ENCODE measurements at regions of chr1 and their contacts with region 1.

Region 1: DNA sequence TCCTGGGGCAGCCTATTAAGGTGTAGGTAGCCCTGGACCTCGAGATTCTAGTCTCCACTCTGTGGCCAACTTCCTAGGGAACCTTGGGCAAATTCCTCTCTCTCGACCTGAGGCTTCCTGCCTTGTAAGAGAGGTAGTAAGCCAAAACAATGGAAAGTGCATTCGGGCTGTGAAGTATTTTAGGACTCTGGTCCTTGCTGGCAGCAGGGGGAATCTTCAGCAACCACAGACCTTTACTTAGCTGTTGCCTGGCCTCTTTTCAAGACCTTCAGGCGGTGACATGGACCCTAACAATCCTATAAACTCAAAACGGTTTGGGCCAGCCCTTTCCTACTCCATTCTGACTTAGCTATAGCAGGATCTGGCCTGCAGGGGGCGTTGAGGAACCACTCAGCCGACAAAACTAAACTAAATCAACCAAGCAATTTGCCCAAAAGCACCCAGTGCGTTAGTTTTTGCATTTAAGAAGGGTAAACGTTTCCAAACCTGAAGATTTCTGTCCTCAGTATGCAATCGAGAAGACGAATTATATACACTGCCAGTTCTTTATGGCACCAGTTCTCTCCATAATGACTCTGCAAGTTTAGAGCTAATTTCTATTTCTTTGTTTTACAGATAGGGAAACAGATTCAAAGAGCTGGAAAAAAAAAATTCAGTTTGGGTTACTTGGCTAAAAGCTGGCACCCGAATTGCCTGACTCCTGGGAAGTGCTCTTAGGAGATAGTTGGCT is 10.9 kb upstream of the SESN2 start:
- DNase-seq: peak; percentile 85
- ATAC-seq: peak; percentile 53
- H3K4me3 Mint-ChIP-seq: peak overlapping the region; percentile 68
- H3K27ac Mint-ChIP-seq: peak overlapping the region; percentile 96
- H3K4me1 Mint-ChIP-seq: peaks cover 34% of the 10 kb centered on the region
- H3K27me3 Mint-ChIP-seq: no peaks in the 10 kb centered on the region
- CTCF ChIP-seq: peak; percentile 95

Region 2: GRCh38 chr1:28208818-28209441 is 39.5 kb before region 1 on chr1:
- CTCF ChIA-PET with region 1: no interaction called
- POLR2A ChIA-PET with region 1: no interaction called
- DNase-seq: peak; percentile 61
- ATAC-seq: peak; percentile 72
- H3K4me3 Mint-ChIP-seq: no peak overlapping the region
- H3K27ac Mint-ChIP-seq: peak overlapping the region; percentile 54
- H3K4me1 Mint-ChIP-seq: peaks cover 6% of the 10 kb centered on the region
- H3K27me3 Mint-ChIP-seq: no peaks in the 10 kb centered on the region
- CTCF ChIP-seq: no peak; the same call in 1 of the 2 replicates

Region 3: DNA sequence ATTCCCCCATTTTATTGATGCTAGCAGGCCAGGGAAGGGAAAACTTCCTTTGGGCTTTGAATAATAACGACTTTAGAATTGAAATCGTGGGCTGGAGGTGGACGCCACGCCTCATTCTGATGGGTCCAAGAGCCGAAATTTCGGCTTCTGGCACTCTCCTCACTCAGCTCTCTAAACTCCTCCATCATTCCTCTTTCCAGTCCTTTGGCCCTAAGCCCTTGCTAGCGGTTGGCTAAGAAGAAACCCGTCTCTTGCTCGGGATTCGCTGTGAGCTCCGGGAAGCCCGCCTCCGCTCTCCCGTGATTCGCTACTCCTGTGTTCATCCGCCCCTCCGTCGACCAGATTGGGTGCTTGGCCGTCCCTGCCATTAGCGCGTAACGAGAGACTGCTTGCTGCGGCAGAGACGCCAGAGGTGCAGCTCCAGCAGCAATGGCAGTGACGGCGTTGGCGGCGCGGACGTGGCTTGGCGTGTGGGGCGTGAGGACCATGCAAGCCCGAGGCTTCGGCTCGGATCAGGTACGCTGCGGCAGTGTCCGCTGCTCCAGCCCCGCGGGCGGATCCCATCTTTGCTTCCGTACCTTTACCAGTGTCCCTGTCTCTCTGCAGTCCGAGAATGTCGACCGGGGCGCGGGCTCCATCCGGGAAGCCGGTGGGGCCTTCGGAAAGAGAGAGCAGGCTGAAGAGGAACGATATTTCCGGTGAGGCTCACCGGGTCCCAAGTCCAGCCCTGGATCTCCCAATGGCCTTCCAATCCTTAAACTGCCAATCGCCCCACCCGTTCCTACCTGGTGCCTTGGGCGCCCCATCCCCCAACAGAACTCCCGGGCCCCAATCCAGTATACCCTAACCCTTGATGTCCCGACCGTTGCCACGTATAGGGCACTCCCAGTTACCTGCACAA is 12.4 kb before region 1 on chr1 and contains the start of gene ATP5IF1:
- CTCF ChIA-PET with region 1: interaction called, 36 read pairs
- POLR2A ChIA-PET with region 1: interaction called, 9 read pairs
- DNase-seq: peak; percentile 95
- ATAC-seq: peak; percentile 97
- H3K4me3 Mint-ChIP-seq: no peak within 1 kb of the TSS
- H3K27ac Mint-ChIP-seq: no peak within 1 kb of the TSS
- H3K4me1 Mint-ChIP-seq: peaks cover 8% of the 10 kb centered on the region
- H3K27me3 Mint-ChIP-seq: no peaks in the 10 kb centered on the region
- CTCF ChIP-seq: no peak
- total RNA-seq, gene ATP5IF1: 201 to 245 TPM (median 228 TPM) in 3 replicates

Region 4: GRCh38 chr1:28266920-28267322 is 18.5 kb after region 1 on chr1:
- CTCF ChIA-PET with region 1: interaction called, 79 read pairs
- POLR2A ChIA-PET with region 1: interaction called, 5 read pairs
- DNase-seq: no peak
- ATAC-seq: peak; percentile 30; the same call in 1 of the 2 replicates
- H3K4me3 Mint-ChIP-seq: no peak overlapping the region
- H3K27ac Mint-ChIP-seq: peak overlapping the region; percentile 29
- H3K4me1 Mint-ChIP-seq: peaks cover 45% of the 10 kb centered on the region
- H3K27me3 Mint-ChIP-seq: no peaks in the 10 kb centered on the region
- CTCF ChIP-seq: no peak

Region 5: GRCh38 chr1:28290851-28291250 is 42.4 kb after region 1 on chr1:
- CTCF ChIA-PET with region 1: interaction called, 17 read pairs
- POLR2A ChIA-PET with region 1: interaction called, 4 read pairs
- DNase-seq: peak; percentile 50
- ATAC-seq: peak; percentile 97
- H3K4me3 Mint-ChIP-seq: no peak overlapping the region
- H3K27ac Mint-ChIP-seq: peak overlapping the region; percentile 94
- H3K4me1 Mint-ChIP-seq: peaks cover 27% of the 10 kb centered on the region
- H3K27me3 Mint-ChIP-seq: no peaks in the 10 kb centered on the region
- CTCF ChIP-seq: no peak

Region 6: DNA sequence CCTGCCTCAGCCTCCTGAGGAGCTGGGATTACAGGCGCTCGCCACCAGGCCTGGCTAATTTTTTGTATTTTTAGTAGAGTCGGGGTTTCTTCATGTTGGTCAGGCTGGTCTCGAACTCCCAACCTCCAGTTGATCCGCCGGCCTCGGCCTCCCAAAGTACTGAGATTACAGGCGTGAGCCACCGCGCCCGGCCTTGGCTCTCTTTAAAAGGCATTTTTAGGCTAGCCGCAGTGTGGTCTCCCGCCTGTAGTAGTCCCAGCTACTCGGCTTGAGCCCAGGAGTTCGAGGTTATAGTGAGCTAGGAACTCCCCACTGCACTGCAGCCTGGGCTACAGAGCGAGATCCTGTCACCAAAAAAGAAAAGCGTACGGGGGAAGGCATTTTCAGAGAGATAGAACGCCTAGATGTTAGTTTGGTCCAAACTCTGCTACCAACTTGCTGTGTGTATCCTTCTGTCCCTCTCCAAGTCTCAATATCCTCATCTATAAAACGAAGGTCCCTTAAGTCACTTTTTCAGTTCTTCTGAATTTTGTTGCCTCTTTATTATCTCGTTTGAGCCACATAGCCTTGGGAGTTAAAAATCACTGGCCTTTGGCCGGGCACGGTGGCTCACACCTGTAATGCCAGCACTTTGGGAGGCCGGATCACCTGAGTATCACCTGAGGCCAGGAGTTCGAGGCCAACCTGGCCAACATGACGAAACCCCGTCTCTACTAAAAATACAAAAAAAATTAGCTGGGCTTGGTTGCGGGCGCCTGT is 81.1 kb after region 1 on chr1:
- CTCF ChIA-PET with region 1: interaction called, 28 read pairs
- POLR2A ChIA-PET with region 1: interaction called, 11 read pairs
- DNase-seq: peak; percentile 50
- ATAC-seq: peak; percentile 63
- H3K4me3 Mint-ChIP-seq: peak overlapping the region; percentile 90
- H3K27ac Mint-ChIP-seq: peak overlapping the region; percentile 99
- H3K4me1 Mint-ChIP-seq: peaks cover 9% of the 10 kb centered on the region
- H3K27me3 Mint-ChIP-seq: peaks cover 2% of the 10 kb centered on the region; the same call in 1 of the 2 replicates
- CTCF ChIP-seq: no peak

Region 7: DNA sequence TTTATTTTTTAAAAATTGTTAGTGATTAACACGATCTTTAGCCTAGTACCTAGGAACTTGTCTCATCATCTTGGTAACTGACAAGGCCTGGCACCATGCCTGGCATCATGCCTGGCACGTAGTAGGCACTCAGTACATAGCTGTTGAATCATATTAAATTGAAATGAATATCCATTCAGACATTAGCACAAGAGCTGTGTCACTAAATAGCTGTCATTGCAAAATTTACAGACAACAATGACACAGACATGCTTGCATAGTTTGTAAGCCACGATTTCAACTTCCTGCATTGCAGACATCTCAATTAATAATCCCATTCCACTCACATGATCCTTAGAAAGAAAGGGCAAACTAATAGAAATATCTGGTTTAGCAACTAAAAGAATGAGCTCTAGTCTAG is 105.7 kb after region 1 on chr1:
- CTCF ChIA-PET with region 1: interaction called, 16 read pairs
- POLR2A ChIA-PET with region 1: no interaction called
- DNase-seq: no peak
- ATAC-seq: no peak
- H3K4me3 Mint-ChIP-seq: no peak overlapping the region
- H3K27ac Mint-ChIP-seq: no peak overlapping the region
- H3K4me1 Mint-ChIP-seq: peaks cover 3% of the 10 kb centered on the region
- H3K27me3 Mint-ChIP-seq: no peaks in the 10 kb centered on the region
- CTCF ChIP-seq: no peak

Region 8: DNA sequence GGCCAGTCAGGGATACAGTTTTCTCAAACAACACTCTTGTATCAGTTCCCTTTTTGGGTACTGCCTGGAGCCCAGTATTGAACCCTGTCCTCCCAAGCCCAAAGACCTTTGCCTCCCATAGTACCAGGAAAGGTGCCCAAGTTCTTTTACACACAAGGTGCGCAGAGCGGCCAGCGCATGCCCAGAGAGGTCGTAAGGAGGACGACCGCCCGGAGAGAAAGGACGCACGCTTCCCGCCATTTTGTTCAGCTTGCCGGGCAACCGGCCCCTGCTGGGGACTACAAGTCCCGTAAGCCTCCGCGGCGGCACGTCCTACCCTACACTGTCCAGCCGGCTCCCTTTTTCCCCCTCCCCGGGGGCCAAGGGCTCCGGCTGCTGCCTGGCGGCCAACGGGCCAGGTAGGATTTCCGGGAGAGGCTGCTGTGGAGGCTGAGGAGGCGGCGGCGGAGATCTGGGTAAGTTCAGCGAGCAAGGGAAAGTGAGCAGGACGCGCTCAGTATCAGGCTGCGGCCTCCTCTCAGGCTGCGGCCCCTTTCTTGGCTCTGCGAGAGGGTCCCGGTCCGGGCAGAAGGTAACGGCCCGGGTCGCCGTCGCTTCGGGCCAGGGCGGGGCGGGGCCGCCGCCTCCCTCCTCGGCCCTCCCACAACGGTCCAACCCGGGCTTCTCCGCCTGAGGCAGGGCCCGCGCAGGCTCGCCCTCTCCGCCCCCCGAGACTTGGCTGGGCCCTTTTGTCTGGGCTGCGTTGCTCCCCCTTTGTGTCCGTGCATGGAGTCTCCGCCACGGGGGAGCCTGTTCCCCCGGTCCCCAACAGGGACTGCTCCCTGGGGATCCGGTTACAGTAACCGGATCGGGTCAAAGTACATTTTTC is 121.2 kb after region 1 on chr1 and contains the start of gene PHACTR4:
- CTCF ChIA-PET with region 1: interaction called, 34 read pairs
- POLR2A ChIA-PET with region 1: interaction called, 7 read pairs
- DNase-seq: peak; percentile 96
- ATAC-seq: peak; percentile 94
- H3K4me3 Mint-ChIP-seq: peak within 1 kb of the TSS; percentile 90
- H3K27ac Mint-ChIP-seq: peak within 1 kb of the TSS; percentile 95
- H3K4me1 Mint-ChIP-seq: peaks cover 30% of the 10 kb centered on the region
- H3K27me3 Mint-ChIP-seq: no peaks in the 10 kb centered on the region
- CTCF ChIP-seq: no peak
- total RNA-seq, gene PHACTR4: 49.2 to 52.9 TPM (median 50.9 TPM) in 3 replicates

Measured in WTC11 (cell line).